RWPE1 (cell line): ENCODE measurements at regions of chr1 and their contacts with region 1.

Region 1: DNA sequence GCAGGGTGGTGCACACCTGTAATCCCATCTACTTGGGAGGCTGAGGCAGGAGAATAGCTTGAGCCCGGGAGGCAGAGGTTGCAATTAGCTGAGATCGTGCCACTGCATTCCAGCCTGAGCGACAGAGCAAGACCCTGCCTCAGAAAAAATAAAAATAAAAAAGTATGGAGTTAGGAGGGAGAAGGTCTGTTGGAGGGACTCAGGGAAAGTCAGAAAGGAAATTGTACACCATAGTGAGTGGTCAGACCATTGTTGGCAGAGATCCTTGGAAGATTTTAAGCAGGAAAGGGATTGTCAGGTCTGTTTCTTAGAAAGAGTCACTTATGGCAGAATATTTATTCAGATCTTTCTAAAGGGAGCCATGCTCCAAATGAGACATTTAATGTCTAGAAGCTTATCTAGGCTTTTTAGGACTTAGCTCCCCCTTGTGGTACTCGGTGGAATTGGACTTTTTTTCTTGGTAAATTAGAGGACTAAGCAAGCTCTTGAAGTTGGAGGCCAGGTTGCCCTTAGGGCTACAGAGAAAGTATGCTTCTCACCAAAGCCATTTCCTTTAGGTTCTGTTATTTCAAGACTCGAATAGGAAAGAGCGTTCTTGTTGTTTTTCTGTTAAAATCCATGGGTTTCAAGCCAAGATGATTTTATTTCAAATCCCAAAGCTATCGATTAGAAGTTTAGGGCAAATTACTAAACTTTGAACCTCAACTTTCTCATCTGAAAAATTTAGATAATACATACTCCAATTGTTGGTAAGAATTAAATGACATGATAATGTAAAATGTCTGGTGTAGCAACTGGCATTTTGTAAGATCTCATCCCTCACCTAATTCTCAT is 16.5 kb downstream of the MIA3 start:
- DNase-seq: peak; percentile 59
- H3K27ac ChIP-seq: 0 out of 2 replicates have a peak overlapping the region, but pooled peaks have one; percentile 18
- CTCF ChIP-seq: peak; percentile 90

Region 2: DNA sequence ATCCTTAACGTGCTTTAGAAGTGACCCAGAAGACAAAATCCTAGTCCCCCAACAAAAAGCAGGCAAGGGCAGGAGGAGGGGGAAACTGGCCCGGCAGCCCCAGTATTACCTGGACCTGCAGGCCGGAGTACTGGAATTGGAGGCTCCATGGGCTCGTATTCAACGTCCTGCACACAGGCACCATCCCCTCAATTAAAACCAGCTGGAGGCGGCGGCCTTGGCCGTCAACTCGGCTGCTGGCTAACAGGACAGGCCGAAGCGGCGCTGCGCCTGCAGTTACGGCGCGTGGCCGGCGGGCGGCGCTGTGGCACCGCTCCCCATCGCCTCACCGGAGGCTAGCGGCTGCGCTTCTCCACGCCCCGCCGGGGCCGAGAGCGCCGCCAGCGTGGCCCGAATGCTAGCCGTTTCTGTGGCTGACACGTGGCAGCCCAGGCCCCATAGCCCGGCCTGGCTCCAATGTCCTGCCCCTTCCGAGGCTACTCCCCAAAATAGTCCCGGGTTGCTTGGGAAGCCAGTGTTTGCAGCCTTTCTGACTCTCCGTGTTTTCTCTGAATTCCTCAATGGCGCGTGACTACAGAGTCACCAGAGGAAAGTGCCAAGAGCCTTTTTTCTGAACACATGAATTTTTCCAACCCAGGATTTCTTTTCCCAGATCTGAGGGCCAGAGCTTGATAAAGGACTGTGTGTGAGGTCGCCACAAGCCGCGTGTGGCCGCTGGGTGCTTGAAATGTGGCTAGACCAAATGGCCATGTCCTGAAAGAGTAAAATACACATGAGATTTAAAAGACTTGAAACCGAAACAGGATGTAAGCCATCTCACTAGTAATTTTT is 169.0 kb before region 1 on chr1:
- CTCF ChIA-PET with region 1: interaction called, 21 read pairs
- POLR2A ChIA-PET with region 1: no interaction called
- DNase-seq: peak; percentile 86
- H3K27ac ChIP-seq: peak overlapping the region; percentile 78
- CTCF ChIP-seq: peak; percentile 99

Region 3: GRCh38 chr1:222852326-222852725 is 217.9 kb after region 1 on chr1:
- CTCF ChIA-PET with region 1: no interaction called
- POLR2A ChIA-PET with region 1: no interaction called
- DNase-seq: no peak
- H3K27ac ChIP-seq: no peak overlapping the region
- CTCF ChIP-seq: no peak